ENCODE measurements at regions of chr18 and their contacts with region 1.

Region 1: DNA sequence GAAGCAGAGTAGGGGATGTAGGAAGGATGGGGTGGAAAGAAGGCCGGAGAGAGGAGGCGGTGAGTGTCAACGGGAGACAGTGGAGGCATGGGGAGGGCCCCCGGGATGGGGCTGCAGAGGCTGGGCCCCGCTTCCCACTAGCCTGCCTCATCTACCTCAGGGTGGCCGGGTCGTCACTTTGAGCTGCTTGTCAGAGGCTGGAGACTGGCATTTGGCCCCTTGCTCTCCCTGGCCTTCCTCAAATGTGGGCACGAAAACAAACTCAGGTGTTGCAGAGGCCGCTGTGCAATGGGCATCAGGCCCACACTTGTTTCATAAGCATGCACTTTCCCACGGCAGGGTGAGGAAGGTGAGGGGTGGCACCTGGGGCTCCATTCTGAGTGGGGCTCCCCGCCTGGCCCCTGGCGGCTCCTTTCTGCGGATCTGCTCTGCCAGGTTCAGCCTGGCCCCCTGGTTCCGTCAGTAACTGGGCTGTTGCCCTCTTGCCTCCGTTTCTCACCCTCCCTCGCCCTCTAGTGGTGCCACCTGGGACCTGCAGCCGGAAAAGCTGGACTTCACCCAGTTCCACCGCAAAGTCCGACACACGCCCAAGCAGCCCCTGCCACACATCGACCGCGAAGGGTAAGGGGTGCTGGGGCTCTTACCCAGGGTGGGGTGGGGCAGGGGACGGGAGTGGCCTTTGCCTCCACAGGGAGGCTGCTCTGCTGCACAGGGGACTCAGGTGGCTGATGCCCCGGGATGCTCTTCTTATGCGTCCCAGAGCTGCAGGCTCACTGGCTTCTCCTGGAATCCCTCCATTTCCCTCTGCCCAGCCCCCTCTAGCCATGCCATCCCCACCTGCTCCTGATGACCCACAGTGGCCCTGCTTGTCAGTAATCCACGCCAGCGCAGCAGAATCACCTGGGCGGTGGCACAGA is 125.4 kb downstream of the CTIF start:
- DNase-seq: peak; percentile 77
- ATAC-seq: peak; percentile 70 to 73
- H3K4me3 ChIP-seq: no peak overlapping the region
- H3K27ac ChIP-seq: no peak overlapping the region
- H3K4me1 ChIP-seq: peaks cover 33% of the 10 kb centered on the region
- H3K27me3 ChIP-seq: no peaks in the 10 kb centered on the region
- CTCF ChIP-seq: peak; percentile 87

Region 2: GRCh38 chr18:48488388-48488850 is 175.8 kb before region 1 on chr18:
- intact Hi-C with region 1: loop called (anchors 10 kb)
- DNase-seq: peak; percentile 75
- ATAC-seq: peak; percentile 85 to 93
- H3K4me3 ChIP-seq: no peak overlapping the region
- H3K27ac ChIP-seq: no peak overlapping the region
- H3K4me1 ChIP-seq: peaks cover 12% of the 10 kb centered on the region
- H3K27me3 ChIP-seq: no peaks in the 10 kb centered on the region
- CTCF ChIP-seq: no peak